ENCODE measurements at regions of chr10 and their contacts with region 1.

Region 1: GRCh38 chr10:6778992-6779701 is 199.1 kb upstream of the PRKCQ start:
- DNase-seq: peak; percentile 99
- H3K4me3 Mint-ChIP-seq: peak overlapping the region; percentile 76
- H3K27ac Mint-ChIP-seq: peak overlapping the region; percentile 98
- H3K4me1 Mint-ChIP-seq: peaks cover 65% of the 10 kb centered on the region
- H3K27me3 Mint-ChIP-seq: no peaks in the 10 kb centered on the region
- CTCF ChIP-seq: no peak

Region 2: DNA sequence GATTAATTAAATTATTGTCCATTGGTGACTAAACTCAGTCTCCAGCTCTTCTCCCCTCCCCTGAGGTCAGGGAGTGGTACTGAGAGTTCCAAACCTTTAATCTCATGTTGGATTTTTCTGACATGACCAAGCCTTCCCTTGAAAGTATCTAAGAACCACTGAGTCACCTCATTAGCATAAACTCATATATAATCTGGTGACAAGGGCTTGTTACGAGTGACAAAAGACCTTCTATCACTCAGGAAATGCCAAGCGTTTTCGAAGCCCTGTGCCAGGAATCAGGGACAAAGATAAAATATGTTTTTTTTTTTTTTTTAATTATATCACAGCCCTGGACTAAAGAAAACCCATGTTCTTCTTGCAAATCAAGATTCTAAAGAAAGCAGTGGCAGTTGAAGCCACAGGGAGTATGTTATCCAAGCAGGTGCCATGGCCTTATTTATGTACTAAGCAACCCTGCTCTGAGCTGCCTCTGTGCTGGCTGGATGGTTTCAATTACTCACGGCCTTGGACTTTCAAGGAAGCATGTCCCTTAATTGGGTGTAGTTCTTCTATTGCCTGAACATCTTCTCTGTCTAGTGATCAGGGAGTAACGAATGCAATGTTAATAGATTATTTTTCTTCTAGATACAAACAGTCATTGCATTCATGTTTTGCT is 30.0 kb before region 1 on chr10:
- CTCF ChIA-PET with region 1: no interaction called
- POLR2A ChIA-PET with region 1: interaction called, 12 read pairs
- intact Hi-C with region 1: loop called (anchors 1 kb)
- DNase-seq: peak; percentile 61
- H3K4me3 Mint-ChIP-seq: peak overlapping the region; percentile 13
- H3K27ac Mint-ChIP-seq: peak overlapping the region; percentile 68
- H3K4me1 Mint-ChIP-seq: peaks cover 40% of the 10 kb centered on the region
- H3K27me3 Mint-ChIP-seq: no peaks in the 10 kb centered on the region
- CTCF ChIP-seq: no peak